ENCODE measurements at regions of chr7 and their contacts with region 1.

Region 1: GRCh38 chr7:5854738-5855137 is 25.9 kb upstream of the OCM start:
- DNase-seq: no peak
- H3K4me3 ChIP-seq: no peak overlapping the region
- H3K27ac ChIP-seq: no peak overlapping the region
- H3K4me1 ChIP-seq: no peaks in the 10 kb centered on the region
- H3K27me3 ChIP-seq: no peaks in the 10 kb centered on the region
- CTCF ChIP-seq: no peak
- EP300 ChIP-seq: no peak
- RAD21 ChIP-seq: no peak

Region 2: DNA sequence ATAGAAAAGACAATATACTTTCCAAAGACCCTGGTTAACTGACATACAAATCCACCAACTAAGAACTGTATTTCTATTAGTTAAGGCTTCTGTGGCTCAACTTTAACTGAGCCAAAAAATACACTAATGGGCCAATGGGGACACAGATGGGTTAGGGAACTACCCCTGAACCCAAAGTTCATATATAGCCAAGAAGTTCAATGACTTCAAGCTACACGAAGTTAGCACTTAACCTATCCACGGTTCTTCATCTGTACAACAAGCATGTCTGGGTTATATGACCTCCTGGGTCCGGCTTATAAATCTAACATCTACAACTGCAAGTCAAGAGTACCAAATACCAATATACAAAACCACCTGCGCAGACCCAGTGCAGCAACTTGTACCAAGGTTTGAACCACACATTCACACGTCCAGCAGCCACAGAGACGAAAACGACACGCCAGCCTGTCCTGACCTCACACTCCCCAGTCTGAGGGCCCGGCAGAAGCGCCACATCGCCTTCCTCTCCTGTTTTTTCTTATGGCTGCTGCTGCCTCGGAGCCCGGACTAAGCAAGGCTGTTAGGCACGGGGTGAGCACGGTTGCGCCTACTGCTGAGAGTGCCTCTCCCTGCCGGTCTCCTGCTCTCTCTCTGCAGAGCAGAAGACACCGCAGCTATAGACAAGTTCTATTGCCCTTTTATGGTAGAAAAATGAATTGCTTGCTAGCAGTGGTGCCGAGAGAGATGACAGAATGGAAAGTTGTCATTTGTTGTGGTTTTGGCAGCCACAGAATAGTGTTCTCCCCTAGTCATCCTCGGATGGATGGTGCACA is 159.6 kb before region 1 on chr7:
- CTCF ChIA-PET with region 1: no interaction called
- POLR2A ChIA-PET with region 1: no interaction called
- DNase-seq: no peak
- H3K4me3 ChIP-seq: peak overlapping the region in 1 of 2 experiments; percentile 16; a peak in 1 of 4 replicates
- H3K27ac ChIP-seq: peak overlapping the region; percentile 95 to 99
- H3K4me1 ChIP-seq: peaks cover 49 to 80% of the 10 kb centered on the region in 2 experiments
- H3K27me3 ChIP-seq: no peaks in the 10 kb centered on the region
- CTCF ChIP-seq: no peak
- EP300 ChIP-seq: peak in 1 of 2 experiments; percentile 88; a peak in 2 of 4 replicates
- RAD21 ChIP-seq: no peak

Region 3: DNA sequence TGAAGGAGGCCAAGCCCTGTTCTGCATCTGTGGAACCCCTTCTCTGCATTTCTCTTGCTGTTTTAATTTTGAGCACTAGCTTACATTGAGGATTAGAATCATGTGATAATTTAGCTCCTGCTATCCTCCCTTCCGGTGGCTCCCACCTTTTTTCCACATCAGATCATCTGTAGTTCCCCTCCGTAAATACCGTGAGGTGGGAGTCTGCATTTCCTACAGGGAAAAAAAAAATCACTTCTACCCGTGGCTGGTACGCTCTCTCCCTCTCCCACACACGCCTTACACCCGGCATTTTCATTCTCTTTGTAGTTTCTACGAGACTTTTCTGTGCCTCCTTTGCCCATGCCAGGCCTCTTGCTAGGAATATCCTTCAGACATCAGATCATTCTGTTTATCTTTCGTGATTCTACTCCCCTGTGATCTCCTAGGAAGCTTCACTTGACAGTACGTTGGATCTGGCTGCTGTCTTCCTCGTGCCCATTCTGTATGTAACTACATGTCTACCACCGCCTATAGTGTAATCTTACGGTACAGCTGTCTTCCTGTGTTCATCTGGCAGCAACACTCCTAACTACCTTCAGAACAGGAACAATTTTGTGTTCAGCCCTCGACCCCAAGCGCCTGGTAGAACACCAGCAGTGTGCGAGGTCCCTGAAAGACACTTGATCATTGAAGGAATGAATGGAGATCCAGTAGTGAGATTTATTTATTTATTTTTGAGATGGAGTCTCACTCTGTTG is 15.8 kb before region 1 on chr7:
- CTCF ChIA-PET with region 1: interaction called, 25 read pairs
- POLR2A ChIA-PET with region 1: interaction called, 4 read pairs
- DNase-seq: no peak
- H3K4me3 ChIP-seq: no peak overlapping the region
- H3K27ac ChIP-seq: no peak overlapping the region
- H3K4me1 ChIP-seq: no peaks in the 10 kb centered on the region
- H3K27me3 ChIP-seq: no peaks in the 10 kb centered on the region
- CTCF ChIP-seq: no peak
- EP300 ChIP-seq: no peak
- RAD21 ChIP-seq: no peak

Region 4: DNA sequence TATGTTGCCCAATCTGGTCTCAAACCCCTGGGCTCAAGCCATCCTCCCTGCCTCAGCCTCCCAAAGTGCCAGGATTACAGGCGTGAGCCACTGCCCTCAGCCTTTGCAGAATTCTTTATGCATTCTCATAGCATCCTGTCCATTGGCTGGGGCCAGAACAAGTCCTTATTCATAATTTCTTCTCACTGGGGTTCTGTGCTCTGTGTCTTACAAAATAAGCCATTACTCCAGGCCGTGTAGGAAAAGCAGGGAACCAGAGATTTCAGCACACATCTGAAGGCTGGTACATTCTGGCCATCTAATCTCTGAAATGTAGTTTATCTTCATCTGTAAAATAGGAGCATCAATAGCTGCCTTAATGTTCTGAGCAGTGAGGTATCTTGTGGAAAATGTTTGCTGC is 15.6 kb after region 1 on chr7:
- CTCF ChIA-PET with region 1: interaction called, 14 read pairs
- POLR2A ChIA-PET with region 1: no interaction called
- DNase-seq: no peak
- H3K4me3 ChIP-seq: no peak overlapping the region
- H3K27ac ChIP-seq: no peak overlapping the region
- H3K4me1 ChIP-seq: no peaks in the 10 kb centered on the region
- H3K27me3 ChIP-seq: no peaks in the 10 kb centered on the region; the same call in 1 of the 2 replicates
- CTCF ChIP-seq: no peak
- EP300 ChIP-seq: no peak
- RAD21 ChIP-seq: no peak

Measured in SK-N-SH (cell line).